GM18951 (cell line): ENCODE measurements at regions of chr10 and their contacts with region 1.

Region 1: GRCh38 chr10:103069453-103070331 is 123.4 kb downstream of the NT5C2 start:
- POLR2A ChIP-seq: no peak

Region 2: GRCh38 chr10:102927311-102928010 is 142.2 kb before region 1 on chr10:
- in situ Hi-C with region 1: loop called (anchors 10 kb)
- POLR2A ChIP-seq: no peak

Region 3: GRCh38 chr10:103373544-103373943 is 303.9 kb after region 1 on chr10:
- in situ Hi-C with region 1: no loop called
- POLR2A ChIP-seq: no peak

Region 4: GRCh38 chr10:103618575-103619423 is 549.1 kb after region 1 on chr10:
- in situ Hi-C with region 1: no loop called
- POLR2A ChIP-seq: no peak